A673 (cell line): ENCODE measurements at regions of chrX and their contacts with region 1.

Region 1: GRCh38 chrX:19225924-19226323 is 103.7 kb upstream of the ADGRG2 start:
- DNase-seq: peak; percentile 88
- H3K4me3 ChIP-seq: no peak overlapping the region
- H3K27ac ChIP-seq: peak overlapping the region; percentile 67
- H3K4me1 ChIP-seq: peaks cover 19% of the 10 kb centered on the region
- H3K27me3 ChIP-seq: no peaks in the 10 kb centered on the region
- CTCF ChIP-seq: peak; percentile 74

Region 2: GRCh38 chrX:18931972-18932371 is 294.0 kb before region 1 on chrX:
- CTCF ChIA-PET with region 1: no interaction called
- POLR2A ChIA-PET with region 1: no interaction called
- intact Hi-C with region 1: loop called (anchors 5 kb)
- DNase-seq: peak; percentile 90
- H3K4me3 ChIP-seq: no peak overlapping the region
- H3K27ac ChIP-seq: no peak overlapping the region
- H3K4me1 ChIP-seq: peaks cover 15% of the 10 kb centered on the region
- H3K27me3 ChIP-seq: no peaks in the 10 kb centered on the region
- CTCF ChIP-seq: peak; percentile 81

Region 3: GRCh38 chrX:18994738-18995137 is 231.2 kb before region 1 on chrX:
- CTCF ChIA-PET with region 1: no interaction called
- POLR2A ChIA-PET with region 1: no interaction called
- intact Hi-C with region 1: loop called (anchors 1 kb)
- DNase-seq: no peak
- H3K4me3 ChIP-seq: no peak overlapping the region
- H3K27ac ChIP-seq: no peak overlapping the region
- H3K4me1 ChIP-seq: peaks cover 32% of the 10 kb centered on the region
- H3K27me3 ChIP-seq: no peaks in the 10 kb centered on the region
- CTCF ChIP-seq: no peak

Region 4: DNA sequence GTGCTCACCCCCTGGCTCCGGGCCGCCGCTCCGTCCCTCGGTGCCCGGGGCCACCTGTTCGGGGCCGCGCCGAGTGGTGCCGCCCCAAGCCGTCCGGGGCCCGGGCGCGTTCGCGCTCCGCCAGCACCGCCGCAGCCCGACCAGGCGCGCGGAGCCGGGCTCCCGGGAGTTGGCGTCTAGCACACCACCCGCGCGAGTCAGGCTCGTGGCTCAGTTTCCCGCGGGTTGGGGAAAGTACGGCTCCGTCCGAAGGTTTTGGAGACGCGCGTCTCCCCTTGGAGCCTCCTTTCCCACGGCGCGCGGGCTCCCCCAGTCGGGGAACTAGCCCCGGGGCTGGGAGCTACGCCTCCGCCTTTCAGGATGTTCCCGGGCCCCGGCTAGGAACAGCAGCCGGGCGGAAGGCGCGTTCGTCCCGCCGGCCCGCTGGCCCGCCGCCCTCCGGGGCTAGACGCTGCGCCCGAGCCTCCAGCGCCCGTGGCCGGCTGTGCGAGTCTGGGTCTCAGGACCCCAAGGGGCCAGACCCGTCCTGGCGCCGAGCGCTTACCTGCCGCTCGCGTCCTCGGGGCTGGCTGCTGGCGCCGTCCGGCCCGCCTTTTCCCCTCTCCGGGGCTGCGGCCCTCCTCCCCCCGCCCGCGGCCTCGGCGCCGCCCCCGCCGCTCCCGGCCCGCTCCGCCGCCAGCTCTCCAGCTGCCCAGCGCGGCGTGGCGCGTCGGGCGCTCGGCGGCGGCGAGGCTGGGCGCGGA is 103.9 kb before region 1 on chrX and contains the start of gene ADGRG2:
- CTCF ChIA-PET with region 1: no interaction called
- POLR2A ChIA-PET with region 1: no interaction called
- intact Hi-C with region 1: loop called (anchors 10 kb)
- DNase-seq: peak; percentile 86
- H3K4me3 ChIP-seq: peak within 1 kb of the TSS; percentile 75
- H3K27ac ChIP-seq: peak within 1 kb of the TSS; percentile 96
- H3K4me1 ChIP-seq: peaks cover 38% of the 10 kb centered on the region
- H3K27me3 ChIP-seq: no peaks in the 10 kb centered on the region
- CTCF ChIP-seq: peak; percentile 42
- total RNA-seq, gene ADGRG2: 61.3 and 73.6 TPM in 2 replicates